Activated CD4-positive, alpha-beta T cell treated with anti-CD3 and anti-CD28 coated beads, Interleukin-2, amount 10 ng/mL, durations not matched to agents 24 days and 14 days (primary cell): ENCODE measurements at regions of chr3 and their contacts with region 1.

Region 1: GRCh38 chr3:197749601-197750395 is at the start of gene FYTTD1:
- DNase-seq: peak; percentile 97
- H3K4me3 Mint-ChIP-seq: peak within 1 kb of the TSS; percentile 92
- H3K27ac Mint-ChIP-seq: peak within 1 kb of the TSS; percentile 96
- H3K4me1 Mint-ChIP-seq: peaks cover 31% of the 10 kb centered on the region
- H3K27me3 Mint-ChIP-seq: peaks cover 4% of the 10 kb centered on the region
- total RNA-seq, gene FYTTD1: 53.2 and 56.8 TPM in 2 replicates

Region 2: DNA sequence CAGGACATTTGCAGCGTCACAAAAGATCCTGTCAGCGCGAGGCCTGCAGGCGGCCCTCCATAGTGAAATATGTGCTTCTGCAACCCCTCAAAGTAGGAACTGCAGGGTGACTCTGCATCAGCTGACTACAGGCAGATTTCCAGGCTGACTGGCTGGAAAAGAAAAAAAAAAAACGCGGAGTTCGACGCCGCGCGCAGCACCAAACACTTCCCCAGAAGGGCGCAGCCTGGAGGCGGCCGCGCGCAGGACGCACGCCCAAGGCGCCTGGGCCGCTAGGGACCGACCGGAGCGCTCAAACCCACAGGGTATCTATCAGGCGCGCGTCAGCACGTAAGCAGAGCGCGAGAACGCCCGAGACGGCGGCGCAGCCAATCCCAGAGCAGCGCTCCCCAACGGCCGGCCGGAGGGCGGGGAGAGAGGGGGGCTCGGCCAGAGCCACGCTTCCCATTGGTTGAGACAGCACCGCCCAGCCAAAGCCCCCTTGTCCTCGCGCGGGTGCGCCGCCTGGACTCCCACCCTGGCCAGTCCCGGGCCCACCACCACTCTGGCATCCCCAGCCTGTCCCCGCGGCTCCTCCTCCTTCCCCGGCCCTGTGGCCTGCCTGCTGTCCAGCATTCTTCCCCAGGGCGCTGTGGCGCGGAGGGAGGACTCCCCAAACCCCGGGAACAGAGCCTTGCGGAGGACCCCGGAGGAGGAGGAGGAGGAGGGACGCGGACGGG is 195.1 kb before region 1 on chr3:
- intact Hi-C with region 1: loop called (anchors 10 kb)
- DNase-seq: peak; percentile 98
- H3K4me3 Mint-ChIP-seq: peak overlapping the region; percentile 88
- H3K27ac Mint-ChIP-seq: peak overlapping the region; percentile 98
- H3K4me1 Mint-ChIP-seq: peaks cover 39% of the 10 kb centered on the region
- H3K27me3 Mint-ChIP-seq: peaks cover 9% of the 10 kb centered on the region

Region 3: GRCh38 chr3:197711973-197712707 is 37.7 kb before region 1 on chr3:
- intact Hi-C with region 1: loop called (anchors 1 kb)
- DNase-seq: peak; percentile 95
- H3K4me3 Mint-ChIP-seq: peak overlapping the region; percentile 78
- H3K27ac Mint-ChIP-seq: peak overlapping the region; percentile 93
- H3K4me1 Mint-ChIP-seq: peaks cover 33% of the 10 kb centered on the region
- H3K27me3 Mint-ChIP-seq: no peaks in the 10 kb centered on the region

Region 4: GRCh38 chr3:197736491-197737318 is 13.1 kb before region 1 on chr3 and contains the start of gene RUBCN:
- intact Hi-C with region 1: loop called (anchors 1 kb)
- DNase-seq: peak; percentile 98
- H3K4me3 Mint-ChIP-seq: peak within 1 kb of the TSS; percentile 94
- H3K27ac Mint-ChIP-seq: peak within 1 kb of the TSS; percentile 97
- H3K4me1 Mint-ChIP-seq: peaks cover 30% of the 10 kb centered on the region
- H3K27me3 Mint-ChIP-seq: no peaks in the 10 kb centered on the region
- total RNA-seq, gene RUBCN: 38.8 and 41.0 TPM in 2 replicates

Region 5: GRCh38 chr3:197801891-197802778 is 52.3 kb after region 1 on chr3:
- intact Hi-C with region 1: loop called (anchors 2 kb)
- DNase-seq: peak; percentile 74
- H3K4me3 Mint-ChIP-seq: peak overlapping the region; percentile 18
- H3K27ac Mint-ChIP-seq: peak overlapping the region; percentile 34
- H3K4me1 Mint-ChIP-seq: peaks cover 33% of the 10 kb centered on the region
- H3K27me3 Mint-ChIP-seq: no peaks in the 10 kb centered on the region